PC-9 (cell line): ENCODE measurements at regions of chr1 and their contacts with region 1.

Region 1: GRCh38 chr1:110106013-110106941 is 6.0 kb upstream of the UBL4B start:
- DNase-seq: peak; percentile 60 to 70
- H3K4me3 ChIP-seq: no peak overlapping the region
- H3K27ac ChIP-seq: 0 out of 2 replicates have a peak overlapping the region, but pooled peaks have one; percentile 99
- H3K4me1 ChIP-seq: peaks cover 84% of the 10 kb centered on the region
- H3K27me3 ChIP-seq: no peaks in the 10 kb centered on the region
- CTCF ChIP-seq: peak; percentile 98

Region 2: GRCh38 chr1:109773146-109773899 is 333.0 kb before region 1 on chr1:
- CTCF ChIA-PET with region 1: no interaction called
- POLR2A ChIA-PET with region 1: no interaction called
- intact Hi-C with region 1: loop called (anchors 10 kb)
- DNase-seq: peak; percentile 78 to 82
- H3K4me3 ChIP-seq: no peak overlapping the region
- H3K27ac ChIP-seq: no peak overlapping the region
- H3K4me1 ChIP-seq: peaks cover 46% of the 10 kb centered on the region
- H3K27me3 ChIP-seq: no peaks in the 10 kb centered on the region
- CTCF ChIP-seq: peak; percentile 97

Region 3: DNA sequence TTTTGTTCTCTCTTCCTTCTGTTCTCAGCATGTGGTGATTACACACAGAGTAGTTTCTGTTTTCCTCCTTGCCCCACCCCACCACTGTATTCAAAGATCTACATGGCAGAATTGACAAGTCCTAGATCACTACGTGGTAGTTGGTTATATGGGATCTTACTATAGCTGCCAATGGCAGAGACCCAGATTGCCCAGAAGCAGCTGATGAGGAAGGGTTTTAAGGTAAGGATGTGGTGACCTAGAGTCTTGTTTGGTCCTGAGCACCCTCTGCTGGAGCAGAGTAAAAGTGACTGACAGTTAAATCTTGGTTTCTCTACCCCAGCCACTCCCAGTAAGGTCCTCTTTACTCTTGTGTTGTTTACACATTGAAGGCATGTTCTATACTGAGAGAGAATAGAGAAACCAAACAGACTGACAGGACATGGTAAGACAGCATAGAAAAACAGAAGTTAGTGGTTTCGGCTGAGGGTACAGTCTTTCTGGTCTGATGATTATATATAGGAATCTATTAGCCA is 94.7 kb before region 1 on chr1:
- CTCF ChIA-PET with region 1: no interaction called
- POLR2A ChIA-PET with region 1: no interaction called
- intact Hi-C with region 1: no loop called
- DNase-seq: peak; percentile 27 to 59
- H3K4me3 ChIP-seq: no peak overlapping the region
- H3K27ac ChIP-seq: no peak overlapping the region
- H3K4me1 ChIP-seq: peaks cover 11% of the 10 kb centered on the region
- H3K27me3 ChIP-seq: no peaks in the 10 kb centered on the region
- CTCF ChIP-seq: peak; percentile 82

Region 4: DNA sequence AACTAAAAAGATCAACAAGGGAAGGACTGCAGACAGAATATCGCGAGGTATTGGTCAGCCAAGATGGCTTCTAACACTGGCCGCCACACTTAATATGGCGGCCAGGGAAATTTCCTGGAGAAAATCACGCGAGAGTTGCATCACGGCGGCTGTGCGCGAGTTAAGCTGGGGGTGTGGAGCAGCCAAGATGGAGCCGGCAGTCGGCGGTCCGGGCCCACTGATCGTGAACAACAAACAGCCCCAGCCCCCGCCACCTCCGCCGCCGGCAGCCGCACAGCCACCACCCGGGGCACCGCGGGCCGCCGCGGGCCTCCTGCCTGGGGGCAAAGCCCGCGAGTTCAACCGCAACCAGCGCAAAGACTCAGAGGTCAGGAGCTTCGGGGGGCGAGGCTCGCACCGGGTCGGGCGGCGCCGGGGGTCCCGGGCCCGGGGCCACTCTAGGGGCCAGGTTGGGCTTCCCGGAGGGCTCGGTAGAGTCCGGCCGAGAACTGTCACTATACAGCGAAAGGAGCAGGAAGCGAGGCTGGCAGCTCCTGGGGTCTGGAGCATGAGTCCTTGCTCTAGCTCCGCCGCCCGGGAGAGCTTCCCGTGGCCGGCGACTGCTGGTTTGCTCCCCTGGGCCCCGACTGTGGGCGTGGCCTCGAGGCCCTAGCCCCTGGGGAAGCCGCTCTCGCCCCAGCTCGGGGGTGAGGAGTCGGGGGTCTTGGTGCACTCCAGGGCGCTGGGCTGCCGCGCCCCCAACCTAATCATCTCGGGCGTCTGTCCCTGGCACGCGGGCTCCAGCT is 71.6 kb before region 1 on chr1 and contains the start of gene STRIP1:
- CTCF ChIA-PET with region 1: interaction called, 4 read pairs
- POLR2A ChIA-PET with region 1: no interaction called
- intact Hi-C with region 1: loop called (anchors 1 kb)
- DNase-seq: peak; percentile 88 to 94
- H3K4me3 ChIP-seq: peak within 1 kb of the TSS; percentile 89
- H3K27ac ChIP-seq: peak within 1 kb of the TSS; percentile 56
- H3K4me1 ChIP-seq: peaks cover 27% of the 10 kb centered on the region
- H3K27me3 ChIP-seq: no peaks in the 10 kb centered on the region
- CTCF ChIP-seq: no peak
- total RNA-seq, gene STRIP1: 32.1 and 36.5 TPM in 2 replicates

Region 5: DNA sequence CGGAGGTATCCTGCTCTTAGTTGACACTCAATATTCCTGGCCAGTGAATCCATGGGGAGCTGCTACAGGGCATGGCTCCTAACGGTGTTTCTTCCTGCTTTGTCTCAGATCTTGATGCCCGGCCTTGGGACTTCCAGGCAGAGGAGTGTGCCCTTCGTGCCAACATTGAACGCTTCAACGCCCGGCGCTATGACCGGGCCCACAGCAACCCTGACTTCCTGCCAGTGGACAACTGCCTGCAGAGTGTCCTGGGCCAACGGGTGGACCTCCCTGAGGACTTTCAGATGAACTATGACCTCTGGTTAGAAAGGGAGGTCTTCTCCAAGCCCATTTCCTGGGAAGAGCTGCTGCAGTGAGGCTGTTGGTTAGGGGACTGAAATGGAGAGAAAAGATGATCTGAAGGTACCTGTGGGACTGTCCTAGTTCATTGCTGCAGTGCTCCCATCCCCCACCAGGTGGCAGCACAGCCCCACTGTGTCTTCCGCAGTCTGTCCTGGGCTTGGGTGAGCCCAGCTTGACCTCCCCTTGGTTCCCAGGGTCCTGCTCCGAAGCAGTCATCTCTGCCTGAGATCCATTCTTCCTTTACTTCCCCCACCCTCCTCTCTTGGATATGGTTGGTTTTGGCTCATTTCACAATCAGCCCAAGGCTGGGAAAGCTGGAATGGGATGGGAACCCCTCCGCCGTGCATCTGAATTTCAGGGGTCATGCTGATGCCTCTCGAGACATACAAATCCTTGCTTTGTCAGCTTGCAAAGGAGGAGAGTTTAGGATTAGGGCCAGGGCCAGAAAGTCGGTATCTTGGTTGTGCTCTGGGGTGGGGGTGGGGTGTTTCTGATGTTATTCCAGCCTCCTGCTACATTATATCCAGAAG is 52.5 kb before region 1 on chr1:
- CTCF ChIA-PET with region 1: interaction called, 7 read pairs
- POLR2A ChIA-PET with region 1: interaction called, 3 read pairs
- intact Hi-C with region 1: loop called (anchors 1 kb)
- DNase-seq: peak in 1 of 2 experiments; percentile 58
- H3K4me3 ChIP-seq: no peak overlapping the region
- H3K27ac ChIP-seq: no peak overlapping the region
- H3K4me1 ChIP-seq: peaks cover 16% of the 10 kb centered on the region; the same call in 1 of the 2 replicates
- H3K27me3 ChIP-seq: no peaks in the 10 kb centered on the region
- CTCF ChIP-seq: peak; percentile 99

Region 6: DNA sequence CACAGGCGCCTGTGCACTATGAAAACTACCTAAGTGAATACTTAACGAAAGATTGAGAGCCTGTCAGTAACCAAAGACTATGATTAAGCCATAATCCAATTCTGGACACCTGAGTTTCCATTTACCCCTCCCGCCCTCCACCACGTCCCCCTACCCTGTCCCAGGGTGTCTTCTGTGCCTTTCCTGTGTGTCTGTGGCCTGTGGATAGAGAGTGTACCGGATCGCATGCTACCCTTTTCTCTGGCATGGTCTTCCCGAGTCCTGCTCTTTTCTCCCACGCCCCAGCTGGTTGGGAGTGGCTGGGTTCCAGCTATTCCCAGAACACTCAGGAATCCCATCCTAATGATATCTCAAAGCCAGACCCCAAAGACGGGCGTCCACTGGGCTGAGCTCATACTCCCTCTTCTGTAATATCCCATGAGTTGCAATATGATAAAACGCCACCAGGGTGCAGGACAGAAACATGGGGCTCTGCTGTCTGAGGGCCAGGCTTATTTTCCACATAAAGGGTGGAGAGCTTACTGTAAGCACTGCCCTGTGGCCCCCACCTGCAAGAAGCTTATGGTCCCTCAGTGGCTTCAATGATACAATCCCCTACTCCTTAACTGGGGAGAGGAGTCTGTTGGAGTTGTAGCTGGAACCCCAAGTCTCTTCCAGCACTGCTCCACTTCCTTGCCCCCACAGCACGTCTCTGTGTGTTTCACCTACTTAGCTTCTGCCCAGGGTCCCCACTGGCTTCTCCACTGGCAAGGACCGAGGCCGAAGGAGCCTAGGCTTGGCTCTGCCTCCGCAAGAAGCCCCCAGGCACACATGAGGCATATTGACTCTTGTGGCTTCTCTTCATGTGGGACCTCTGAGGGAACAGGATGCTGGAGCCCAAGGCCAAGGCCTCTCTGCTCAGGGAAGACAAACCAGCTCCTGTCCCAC is 18.2 kb before region 1 on chr1:
- CTCF ChIA-PET with region 1: interaction called, 30 read pairs
- POLR2A ChIA-PET with region 1: no interaction called
- intact Hi-C with region 1: loop called (anchors 2 kb)
- DNase-seq: peak; percentile 47 to 60
- H3K4me3 ChIP-seq: no peak overlapping the region
- H3K27ac ChIP-seq: peak overlapping the region; percentile 65
- H3K4me1 ChIP-seq: peaks cover 76% of the 10 kb centered on the region
- H3K27me3 ChIP-seq: no peaks in the 10 kb centered on the region
- CTCF ChIP-seq: peak; percentile 95